HepG2 (cell line): ENCODE measurements at regions of chr4 and their contacts with region 1.

Region 1: DNA sequence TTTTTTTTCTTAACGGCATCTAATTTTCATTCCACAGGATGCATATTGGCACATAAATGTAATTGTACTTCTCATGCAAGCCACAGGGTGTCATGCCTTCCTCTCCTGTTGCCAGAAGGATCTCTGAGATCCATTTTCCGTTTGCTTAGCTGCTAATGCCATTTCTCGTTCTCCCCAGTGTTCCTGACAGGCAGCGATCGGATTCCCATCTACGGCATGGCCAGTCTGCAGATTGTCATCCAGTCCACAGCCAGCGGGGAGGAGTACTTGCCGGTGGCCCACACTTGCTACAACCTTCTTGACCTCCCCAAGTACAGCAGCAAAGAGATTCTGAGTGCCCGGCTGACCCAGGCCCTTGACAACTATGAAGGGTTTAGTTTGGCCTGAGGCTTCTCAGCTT is 8.9 kb upstream of the NAP1L5 start:
- DNase-seq: peak; percentile 53
- ATAC-seq: peak; percentile 92
- H3K4me3 ChIP-seq: no peak overlapping the region
- H3K27ac ChIP-seq: no peak overlapping the region
- H3K4me1 ChIP-seq: no peaks in the 10 kb centered on the region
- H3K27me3 ChIP-seq: no peaks in the 10 kb centered on the region
- CTCF ChIP-seq: peak; percentile 72
- EP300 ChIP-seq: no peak
- POLR2A ChIP-seq: no peak
- RAD21 ChIP-seq: peak; percentile 65; the same call in 1 of the 2 replicates

Region 2: DNA sequence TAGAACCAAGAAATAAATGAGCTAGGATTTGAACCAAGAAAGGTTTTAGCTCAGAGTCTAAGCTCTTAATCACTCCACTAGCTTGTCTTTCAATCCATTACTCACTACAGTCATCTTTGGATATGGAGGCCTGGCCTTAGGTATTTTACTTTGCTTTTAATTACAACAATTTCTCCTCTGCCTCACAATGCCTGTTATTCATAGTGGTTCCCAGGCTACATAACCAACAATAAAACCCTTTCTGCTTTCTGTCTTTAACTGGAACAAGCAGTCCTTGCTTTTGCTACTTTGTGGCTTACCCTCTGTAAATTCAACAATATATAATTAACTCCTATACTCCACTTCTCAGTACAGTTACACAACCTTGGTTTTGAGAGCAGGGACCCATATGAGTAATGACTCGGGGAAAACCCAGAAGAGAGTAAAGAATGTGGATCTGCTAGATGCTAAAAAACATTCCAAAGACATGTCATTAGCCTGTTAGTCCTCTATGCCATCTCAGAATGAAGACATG is 85.8 kb after region 1 on chr4:
- CTCF ChIA-PET with region 1: no interaction called
- POLR2A ChIA-PET with region 1: no interaction called
- in situ Hi-C with region 1: loop called (anchors 5 kb)
- intact Hi-C with region 1: loop called (anchors 1 kb)
- DNase-seq: peak; percentile 9
- ATAC-seq: no peak
- H3K4me3 ChIP-seq: no peak overlapping the region
- H3K27ac ChIP-seq: no peak overlapping the region
- H3K4me1 ChIP-seq: no peaks in the 10 kb centered on the region
- H3K27me3 ChIP-seq: no peaks in the 10 kb centered on the region
- CTCF ChIP-seq: no peak
- EP300 ChIP-seq: no peak
- POLR2A ChIP-seq: no peak
- RAD21 ChIP-seq: no peak

Region 3: DNA sequence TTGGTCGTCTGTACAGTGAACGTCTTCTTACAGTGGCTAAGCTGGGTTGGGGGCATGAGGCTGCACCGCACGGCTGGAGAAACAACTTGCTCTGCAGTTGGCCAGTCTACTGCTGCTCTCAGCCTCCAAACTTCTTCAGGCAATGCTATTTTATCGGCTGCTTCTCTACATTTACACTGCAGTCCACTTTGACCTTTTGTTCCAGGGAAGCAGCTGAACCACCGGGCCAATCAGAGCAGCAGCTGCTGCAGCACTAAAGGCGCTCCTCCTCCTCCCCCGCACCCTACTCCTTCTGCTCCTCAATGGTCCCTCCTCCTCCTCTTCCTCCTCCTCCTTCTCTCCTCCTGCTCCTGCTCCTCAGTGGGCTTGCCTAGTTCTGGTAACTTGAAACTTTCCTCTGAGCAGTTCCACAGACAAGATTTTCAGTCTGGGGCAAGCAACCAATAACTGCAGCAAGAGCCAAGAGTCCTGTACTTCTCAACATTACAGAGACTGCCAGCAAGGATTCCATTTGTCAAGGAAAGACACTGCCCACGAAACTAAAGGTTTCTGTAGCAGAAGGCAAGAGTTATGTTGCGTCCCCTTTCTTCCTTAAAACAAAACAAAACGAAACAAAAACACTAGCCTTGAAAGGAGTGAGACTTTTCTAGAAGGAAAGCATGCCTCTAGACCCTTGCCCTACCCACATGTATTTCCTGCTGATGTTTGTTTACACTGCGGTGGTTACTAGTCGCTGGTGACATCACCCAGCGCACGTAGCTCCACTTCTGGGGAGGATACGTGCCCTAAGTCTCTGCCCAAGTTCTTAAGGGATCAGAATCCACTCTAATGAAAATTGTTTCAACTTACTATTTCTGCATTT is 116.7 kb after region 1 on chr4:
- CTCF ChIA-PET with region 1: no interaction called
- POLR2A ChIA-PET with region 1: no interaction called
- in situ Hi-C with region 1: no loop called
- intact Hi-C with region 1: loop called (anchors 1 kb)
- DNase-seq: peak; percentile 61
- ATAC-seq: peak; percentile 97
- H3K4me3 ChIP-seq: peak overlapping the region; percentile 60 to 78 (median 76)
- H3K27ac ChIP-seq: peak overlapping the region; percentile 64
- H3K4me1 ChIP-seq: peaks cover 57% of the 10 kb centered on the region
- H3K27me3 ChIP-seq: no peaks in the 10 kb centered on the region; a peak in 1 of 5 replicates
- CTCF ChIP-seq: no peak
- EP300 ChIP-seq: peak in 1 of 2 experiments; percentile 64; a peak in 1 of 4 replicates
- POLR2A ChIP-seq: peak; percentile 34 to 95; a peak in 3 of 4 replicates
- RAD21 ChIP-seq: no peak